MCF 10A (cell line): ENCODE measurements at regions of chr9 and their contacts with region 1.

Region 1: GRCh38 chr9:98791147-98792095 is 4.9 kb downstream of the ANKS6 start:
- DNase-seq: peak; percentile 98
- H3K4me3 Mint-ChIP-seq: peak overlapping the region; percentile 50
- H3K27ac Mint-ChIP-seq: no peak overlapping the region
- H3K4me1 Mint-ChIP-seq: peaks cover 35% of the 10 kb centered on the region
- H3K27me3 Mint-ChIP-seq: no peaks in the 10 kb centered on the region
- CTCF ChIP-seq: peak; percentile 97

Region 2: DNA sequence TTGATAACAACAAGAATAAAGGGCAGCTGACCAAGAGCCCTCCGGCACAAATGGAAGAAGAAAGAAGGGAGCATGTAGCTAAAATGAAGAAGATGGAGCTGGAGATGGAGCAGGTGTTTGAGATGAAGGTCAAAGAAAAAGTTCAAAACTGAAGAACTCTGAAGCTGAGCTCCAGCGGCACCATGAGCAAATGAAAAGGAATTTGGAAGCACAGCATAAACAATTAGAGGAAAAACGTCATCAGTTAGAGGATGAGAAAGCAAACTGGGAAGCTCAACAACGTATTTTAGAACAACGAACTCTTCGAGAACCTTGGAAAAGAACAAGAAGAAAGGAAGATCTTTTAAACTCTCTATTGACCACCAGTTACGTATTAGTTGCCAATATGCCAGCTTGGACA is 183.6 kb before region 1 on chr9:
- CTCF ChIA-PET with region 1: no interaction called
- POLR2A ChIA-PET with region 1: no interaction called
- intact Hi-C with region 1: no loop called
- DNase-seq: peak; percentile 35
- H3K4me3 Mint-ChIP-seq: no peak overlapping the region
- H3K27ac Mint-ChIP-seq: no peak overlapping the region
- H3K4me1 Mint-ChIP-seq: peaks cover 12% of the 10 kb centered on the region
- H3K27me3 Mint-ChIP-seq: no peaks in the 10 kb centered on the region
- CTCF ChIP-seq: no peak

Region 3: GRCh38 chr9:98801969-98802371 is 10.5 kb after region 1 on chr9:
- CTCF ChIA-PET with region 1: interaction called, 15 read pairs
- POLR2A ChIA-PET with region 1: interaction called, 4 read pairs
- intact Hi-C with region 1: no loop called
- DNase-seq: no peak
- H3K4me3 Mint-ChIP-seq: no peak overlapping the region
- H3K27ac Mint-ChIP-seq: no peak overlapping the region
- H3K4me1 Mint-ChIP-seq: peaks cover 34% of the 10 kb centered on the region
- H3K27me3 Mint-ChIP-seq: peaks cover 12% of the 10 kb centered on the region
- CTCF ChIP-seq: no peak

Region 4: GRCh38 chr9:99377790-99378775 is 586.7 kb after region 1 on chr9:
- CTCF ChIA-PET with region 1: no interaction called
- POLR2A ChIA-PET with region 1: no interaction called
- intact Hi-C with region 1: no loop called
- DNase-seq: no peak
- H3K4me3 Mint-ChIP-seq: no peak overlapping the region
- H3K27ac Mint-ChIP-seq: no peak overlapping the region
- H3K4me1 Mint-ChIP-seq: no peaks in the 10 kb centered on the region
- H3K27me3 Mint-ChIP-seq: peaks cover 20% of the 10 kb centered on the region
- CTCF ChIP-seq: no peak